ENCODE measurements at regions of chr9 and their contacts with region 1.

Region 1: GRCh38 chr9:89278997-89279739 is 31.8 kb upstream of the CKS2 start:
- DNase-seq: no peak
- H3K4me3 Mint-ChIP-seq: no peak overlapping the region
- H3K27ac Mint-ChIP-seq: no peak overlapping the region
- H3K4me1 Mint-ChIP-seq: peaks cover 20% of the 10 kb centered on the region
- H3K27me3 Mint-ChIP-seq: peaks cover 4% of the 10 kb centered on the region

Region 2: DNA sequence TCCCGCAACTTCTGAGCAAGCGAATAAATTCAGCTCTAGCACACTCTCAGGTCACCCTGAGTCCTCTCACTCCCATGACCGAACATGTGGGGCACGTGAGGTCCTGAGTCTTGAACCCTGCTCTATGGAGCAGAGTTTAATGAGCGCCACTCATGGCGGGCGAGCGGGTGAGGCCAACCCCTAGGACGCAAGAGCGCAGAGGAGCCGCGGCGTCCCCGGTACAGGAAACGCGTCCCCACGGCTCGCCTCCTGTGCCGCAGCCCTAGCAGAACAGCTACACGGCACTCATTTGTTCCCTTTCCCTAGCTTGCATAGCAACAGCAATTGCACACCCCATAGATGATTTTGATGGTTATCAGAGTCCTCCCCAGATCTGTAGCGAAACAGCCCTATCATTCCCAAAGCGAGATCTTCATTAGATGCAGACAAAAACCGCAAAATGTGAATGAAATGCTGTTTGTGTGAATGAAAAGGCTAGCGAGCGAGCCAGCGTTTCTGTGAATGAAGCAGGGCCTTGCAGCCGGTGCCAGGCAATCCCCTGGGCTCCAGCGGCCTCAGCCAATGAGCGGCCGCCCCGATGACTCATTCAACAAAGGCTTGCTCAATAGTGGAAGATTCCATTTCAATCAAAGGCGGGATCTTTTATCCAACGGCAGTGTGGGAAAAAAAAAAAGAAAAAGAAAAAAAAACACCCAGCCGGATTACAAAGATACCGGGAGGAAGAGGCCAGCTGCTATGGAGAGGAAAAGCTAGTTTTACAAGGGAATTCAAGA is 99.1 kb before region 1 on chr9:
- intact Hi-C with region 1: loop called (anchors 5 kb)
- DNase-seq: peak; percentile 15
- H3K4me3 Mint-ChIP-seq: peak overlapping the region; percentile 40
- H3K27ac Mint-ChIP-seq: peak overlapping the region; percentile 15
- H3K4me1 Mint-ChIP-seq: peaks cover 17% of the 10 kb centered on the region
- H3K27me3 Mint-ChIP-seq: peaks cover 61% of the 10 kb centered on the region

Region 3: GRCh38 chr9:89225991-89226471 is 53.1 kb before region 1 on chr9:
- intact Hi-C with region 1: loop called (anchors 5 kb)
- DNase-seq: no peak
- H3K4me3 Mint-ChIP-seq: no peak overlapping the region
- H3K27ac Mint-ChIP-seq: no peak overlapping the region
- H3K4me1 Mint-ChIP-seq: no peaks in the 10 kb centered on the region
- H3K27me3 Mint-ChIP-seq: peaks cover 35% of the 10 kb centered on the region